Activated naive CD4-positive, alpha-beta T cell treated with anti-CD3 and anti-CD28 coated beads for 36 hours (primary cell): ENCODE measurements at regions of chr22 and their contacts with region 1.

Region 1: GRCh38 chr22:21712894-21713712 is 22.5 kb downstream of the YPEL1 start:
- DNase-seq: peak; percentile 70
- H3K4me3 Mint-ChIP-seq: no peak overlapping the region
- H3K27ac Mint-ChIP-seq: no peak overlapping the region
- H3K4me1 Mint-ChIP-seq: peaks cover 9% of the 10 kb centered on the region
- H3K27me3 Mint-ChIP-seq: no peaks in the 10 kb centered on the region

Region 2: GRCh38 chr22:21726650-21727049 is 13.5 kb after region 1 on chr22:
- CTCF ChIA-PET with region 1: interaction called, 4 read pairs
- intact Hi-C with region 1: loop called (anchors 1 kb)
- DNase-seq: peak; percentile 60
- H3K4me3 Mint-ChIP-seq: no peak overlapping the region
- H3K27ac Mint-ChIP-seq: no peak overlapping the region
- H3K4me1 Mint-ChIP-seq: peaks cover 2% of the 10 kb centered on the region
- H3K27me3 Mint-ChIP-seq: no peaks in the 10 kb centered on the region

Region 3: DNA sequence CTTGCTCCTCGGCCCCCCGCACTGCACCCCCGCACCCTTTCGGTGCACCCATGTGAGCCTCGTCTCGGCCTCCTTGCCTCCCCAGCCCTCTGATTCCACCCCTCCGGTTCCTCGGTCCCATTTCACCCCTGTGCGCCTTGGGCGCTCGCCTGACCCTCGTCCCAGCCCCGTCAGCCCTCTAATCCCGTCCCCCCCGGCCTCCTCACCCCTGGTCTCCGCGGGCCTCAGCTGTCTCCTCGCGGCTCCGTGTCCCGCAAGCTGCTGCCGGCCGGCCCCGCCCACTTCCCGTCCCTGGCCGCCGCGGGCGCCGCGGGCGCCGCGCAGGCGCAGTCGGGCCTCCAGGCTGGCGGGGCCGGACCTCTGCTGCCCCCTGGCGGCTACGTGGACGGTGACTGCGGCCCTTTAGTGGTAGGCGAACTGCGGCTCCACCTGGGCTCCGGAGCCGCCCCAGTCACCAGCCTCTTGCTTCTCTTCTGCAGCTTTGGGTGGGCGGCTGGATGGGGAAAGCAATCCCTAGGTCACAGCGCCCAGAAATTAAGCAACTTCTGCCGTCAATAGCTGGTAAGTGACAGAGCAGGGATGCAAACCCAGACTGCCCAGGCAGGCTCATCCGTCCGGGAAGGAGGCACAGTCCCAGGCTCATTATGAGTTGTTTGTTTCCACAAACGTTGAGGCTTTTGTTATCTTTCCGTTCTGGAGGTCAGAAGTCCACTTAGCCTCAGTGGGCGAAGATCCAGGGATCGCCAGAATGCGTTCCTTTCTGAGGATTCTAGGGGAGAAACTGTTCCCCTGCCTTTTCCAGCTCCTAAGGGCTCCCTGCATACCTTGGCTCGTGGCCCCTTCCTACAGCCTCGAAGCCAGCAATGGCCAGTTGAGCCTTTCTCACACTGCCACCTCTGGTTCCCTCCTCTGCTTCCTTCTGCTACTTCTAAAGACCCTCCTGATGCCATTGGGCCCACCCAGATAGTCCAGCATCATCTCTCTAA is 239.8 kb after region 1 on chr22 and contains the start of gene PPM1F:
- CTCF ChIA-PET with region 1: interaction called, 5 read pairs
- intact Hi-C with region 1: loop called (anchors 2 kb)
- DNase-seq: peak; percentile 88
- H3K4me3 Mint-ChIP-seq: peak within 1 kb of the TSS; percentile 88
- H3K27ac Mint-ChIP-seq: no peak within 1 kb of the TSS
- H3K4me1 Mint-ChIP-seq: peaks cover 11% of the 10 kb centered on the region
- H3K27me3 Mint-ChIP-seq: no peaks in the 10 kb centered on the region
- total RNA-seq, gene PPM1F: 23.0 to 24.3 TPM